ENCODE measurements at regions of chr14 and their contacts with region 1.

Region 1: DNA sequence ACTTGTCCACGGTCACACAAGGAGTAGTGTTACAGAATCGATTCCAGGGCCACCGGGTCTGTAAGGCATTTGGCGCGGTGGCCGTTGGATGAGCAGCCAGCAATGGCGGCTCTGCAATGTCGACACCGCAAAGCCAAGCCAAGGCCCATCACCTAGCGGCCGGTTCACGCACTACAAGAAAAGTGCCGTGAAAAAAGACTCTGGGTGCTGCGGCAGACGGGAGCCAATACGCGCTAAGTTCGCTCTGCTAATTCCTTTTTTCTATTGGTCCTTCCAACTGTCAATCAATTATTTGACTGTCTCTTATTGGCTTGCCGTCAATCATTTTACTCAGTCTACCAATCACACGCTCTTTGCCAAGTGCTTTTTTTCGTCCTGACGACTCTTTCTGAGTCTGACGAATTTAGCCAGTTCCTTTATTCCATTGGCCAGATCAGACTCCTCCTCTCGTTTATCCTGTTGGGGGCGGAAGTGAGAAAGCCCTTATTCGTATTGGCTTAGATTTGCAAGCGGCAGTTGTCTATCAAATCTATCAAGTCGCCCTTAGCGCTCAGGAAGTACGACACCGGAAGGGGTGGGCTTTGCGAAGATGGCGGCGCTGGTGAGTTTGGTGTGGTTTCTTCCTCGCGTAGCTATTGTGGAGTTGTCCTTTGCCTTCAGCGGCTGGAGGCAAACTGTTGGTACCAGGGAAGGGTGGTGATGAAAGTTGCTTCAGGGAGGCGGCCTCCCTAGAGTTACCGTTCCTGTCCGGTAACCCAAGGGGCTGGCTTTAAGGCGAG is at the start of gene NGDN:
- DNase-seq: peak; percentile 98
- ATAC-seq: peak; percentile 93
- H3K4me3 ChIP-seq: peak within 1 kb of the TSS; percentile 77 to 94 (median 92)
- H3K4me3 Mint-ChIP-seq: no peak within 1 kb of the TSS
- H3K27ac ChIP-seq: peak within 1 kb of the TSS; percentile 86 to 87
- H3K27ac Mint-ChIP-seq: no peak within 1 kb of the TSS
- H3K4me1 ChIP-seq: peaks cover 11 to 15% of the 10 kb centered on the region in 2 donors
- H3K4me1 Mint-ChIP-seq: peaks cover 7% of the 10 kb centered on the region
- H3K27me3 ChIP-seq: no peaks in the 10 kb centered on the region
- H3K27me3 Mint-ChIP-seq: peaks cover 7% of the 10 kb centered on the region
- CTCF ChIP-seq: peak; percentile 86
- total RNA-seq, gene NGDN: 81.8 and 84.4 TPM in 2 replicates

Region 2: DNA sequence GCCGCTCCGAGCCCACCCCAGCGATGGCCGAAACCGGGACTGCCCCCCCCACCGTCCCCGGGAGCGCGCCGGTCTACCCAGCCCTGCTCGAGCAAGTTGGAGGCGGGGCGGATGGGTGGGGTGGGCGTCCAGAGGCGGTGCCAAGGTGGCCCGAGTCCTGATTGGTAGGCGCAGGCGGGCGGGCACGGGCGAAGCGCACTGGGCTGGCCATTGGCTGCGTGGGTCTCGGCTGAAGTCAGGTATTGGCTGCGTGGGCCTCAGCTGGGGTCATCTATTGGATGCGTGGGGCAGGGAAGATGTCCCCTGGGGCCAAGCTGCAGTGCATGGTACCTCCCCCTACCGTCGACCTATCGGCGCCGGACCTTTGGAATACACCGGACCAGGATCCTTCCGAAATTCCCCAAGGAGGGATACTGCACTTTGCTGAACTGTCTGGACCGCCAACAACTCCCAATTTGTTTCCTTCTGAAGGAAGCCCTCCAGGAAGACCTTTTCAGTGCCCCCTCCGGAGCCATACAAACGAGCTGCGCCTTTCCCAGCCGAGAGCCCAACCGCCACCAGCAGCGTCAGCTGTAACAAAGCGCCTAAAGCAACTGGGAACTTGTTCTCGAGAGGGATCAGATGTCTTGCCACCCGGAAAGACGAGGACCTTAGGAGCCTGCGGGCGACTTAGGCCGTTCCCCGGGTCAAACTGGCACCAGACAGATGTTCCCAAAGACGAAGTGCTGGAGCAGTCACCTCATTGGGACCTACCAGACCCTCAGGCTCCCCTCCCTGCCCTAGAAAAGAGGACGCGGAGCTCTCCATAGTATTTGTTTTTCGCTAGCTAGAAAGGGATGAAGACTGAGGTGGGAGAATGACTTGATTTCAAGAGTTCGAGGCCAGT is 183.1 kb before region 1 on chr14 and contains the start of gene HOMEZ:
- CTCF ChIA-PET with region 1: no interaction called
- POLR2A ChIA-PET with region 1: no interaction called
- intact Hi-C with region 1: loop called (anchors 1 kb)
- DNase-seq: peak; percentile 97
- ATAC-seq: peak; percentile 97
- H3K4me3 ChIP-seq: peak within 1 kb of the TSS; percentile 56 to 90 (median 83)
- H3K4me3 Mint-ChIP-seq: peak within 1 kb of the TSS; percentile 98
- H3K27ac ChIP-seq: peak within 1 kb of the TSS; percentile 49 to 83
- H3K27ac Mint-ChIP-seq: peak within 1 kb of the TSS; percentile 93
- H3K4me1 ChIP-seq: peaks cover 13 to 17% of the 10 kb centered on the region in 2 donors
- H3K4me1 Mint-ChIP-seq: peaks cover 23% of the 10 kb centered on the region
- H3K27me3 ChIP-seq: no peaks in the 10 kb centered on the region
- H3K27me3 Mint-ChIP-seq: no peaks in the 10 kb centered on the region
- CTCF ChIP-seq: no peak
- total RNA-seq, gene HOMEZ: 15.5 TPM in 2 replicates

Region 3: DNA sequence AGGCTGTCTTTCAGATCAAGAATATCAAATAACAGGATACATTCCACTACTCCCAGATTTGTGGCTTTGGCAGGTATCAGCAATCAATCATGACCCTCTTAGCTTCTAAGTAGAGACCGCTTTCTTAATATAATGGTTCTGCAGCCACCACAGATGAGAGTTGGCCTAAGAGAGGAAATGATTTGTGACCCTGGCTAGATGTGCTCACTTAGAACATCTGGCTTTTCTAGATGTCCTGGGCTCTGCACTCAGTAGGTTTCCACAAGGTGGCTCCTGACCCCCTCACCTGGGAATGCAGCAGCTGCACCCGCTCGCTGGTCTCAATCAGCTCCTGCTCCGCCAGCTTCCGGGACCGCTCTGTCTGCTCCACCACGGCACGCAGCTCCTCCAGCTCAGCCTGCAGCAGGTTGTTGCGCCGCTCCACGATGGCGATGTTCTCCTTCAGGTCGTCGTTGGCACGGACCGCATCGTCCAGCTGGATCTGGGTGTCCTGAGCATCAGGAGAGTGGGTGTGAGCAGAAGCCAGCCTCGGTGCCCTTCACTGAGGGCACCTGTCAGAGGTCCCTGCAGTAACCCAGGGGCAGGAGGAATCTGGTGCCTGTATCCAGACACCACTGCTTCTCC is 83.6 kb before region 1 on chr14:
- CTCF ChIA-PET with region 1: no interaction called
- POLR2A ChIA-PET with region 1: no interaction called
- intact Hi-C with region 1: no loop called
- DNase-seq: no peak
- ATAC-seq: no peak
- H3K4me3 ChIP-seq: no peak overlapping the region
- H3K4me3 Mint-ChIP-seq: no peak overlapping the region
- H3K27ac ChIP-seq: no peak overlapping the region
- H3K27ac Mint-ChIP-seq: no peak overlapping the region
- H3K4me1 ChIP-seq: no peaks in the 10 kb centered on the region
- H3K4me1 Mint-ChIP-seq: no peaks in the 10 kb centered on the region
- H3K27me3 ChIP-seq: peaks cover 0 to 12% (median 0%) of the 10 kb centered on the region in 4 experiments
- H3K27me3 Mint-ChIP-seq: peaks cover 35% of the 10 kb centered on the region
- CTCF ChIP-seq: no peak

Region 4: DNA sequence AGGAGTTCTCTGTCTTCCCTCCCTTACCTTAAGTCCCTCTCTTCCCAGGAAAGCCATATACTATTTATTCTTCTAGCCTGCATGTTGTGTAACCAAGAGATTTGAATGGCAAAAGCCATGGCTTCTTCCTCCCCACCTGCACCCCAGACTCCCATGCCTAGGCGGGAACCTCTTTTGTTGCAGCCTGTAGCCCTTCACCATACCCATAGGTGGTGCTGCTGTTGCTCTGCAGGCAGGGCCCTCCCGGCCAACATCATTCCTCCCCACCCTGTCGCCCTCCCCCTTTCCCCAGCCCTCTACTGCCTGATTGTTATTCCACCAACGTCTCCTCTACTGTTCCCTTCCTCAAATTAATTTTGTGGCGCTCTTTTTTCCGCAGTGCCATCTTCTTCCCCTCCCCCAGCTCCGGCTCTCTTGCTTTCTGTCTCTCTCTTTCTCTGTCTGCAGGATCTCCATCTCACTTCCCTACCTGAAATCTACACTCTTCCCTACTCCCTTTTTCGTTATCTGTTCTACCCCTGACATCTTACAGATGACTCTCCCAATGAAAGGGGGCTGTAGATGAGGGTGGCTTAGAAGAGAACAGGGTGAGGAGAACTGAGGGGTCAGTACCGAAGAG is 14.0 kb after region 1 on chr14:
- CTCF ChIA-PET with region 1: interaction called, 15 read pairs
- POLR2A ChIA-PET with region 1: no interaction called
- intact Hi-C with region 1: loop called (anchors 1 kb)
- DNase-seq: no peak
- ATAC-seq: no peak
- H3K4me3 ChIP-seq: no peak overlapping the region
- H3K4me3 Mint-ChIP-seq: no peak overlapping the region
- H3K27ac ChIP-seq: no peak overlapping the region
- H3K27ac Mint-ChIP-seq: no peak overlapping the region
- H3K4me1 ChIP-seq: no peaks in the 10 kb centered on the region
- H3K4me1 Mint-ChIP-seq: no peaks in the 10 kb centered on the region
- H3K27me3 ChIP-seq: no peaks in the 10 kb centered on the region
- H3K27me3 Mint-ChIP-seq: no peaks in the 10 kb centered on the region
- CTCF ChIP-seq: peak; percentile 10

Region 5: GRCh38 chr14:23555882-23556699 is 86.8 kb after region 1 on chr14 and contains the start of gene THTPA:
- CTCF ChIA-PET with region 1: interaction called, 335 read pairs
- POLR2A ChIA-PET with region 1: interaction called, 5 read pairs
- intact Hi-C with region 1: loop called (anchors 1 kb)
- DNase-seq: peak; percentile 96
- ATAC-seq: peak; percentile 78
- H3K4me3 ChIP-seq: peak within 1 kb of the TSS; percentile 17 to 97 (median 81)
- H3K4me3 Mint-ChIP-seq: peak within 1 kb of the TSS; percentile 98
- H3K27ac ChIP-seq: peak within 1 kb of the TSS; percentile 69 to 84
- H3K27ac Mint-ChIP-seq: peak within 1 kb of the TSS; percentile 99
- H3K4me1 ChIP-seq: peaks cover 19 to 36% of the 10 kb centered on the region in 2 donors
- H3K4me1 Mint-ChIP-seq: peaks cover 45% of the 10 kb centered on the region
- H3K27me3 ChIP-seq: no peaks in the 10 kb centered on the region
- H3K27me3 Mint-ChIP-seq: no peaks in the 10 kb centered on the region
- CTCF ChIP-seq: no peak
- total RNA-seq, gene THTPA: 21.4 and 21.5 TPM in 2 replicates

Region 6: GRCh38 chr14:23953464-23954278 is 484.4 kb after region 1 on chr14 and contains the start of gene DHRS4:
- CTCF ChIA-PET with region 1: no interaction called
- POLR2A ChIA-PET with region 1: no interaction called
- intact Hi-C with region 1: loop called (anchors 5 kb)
- DNase-seq: peak; percentile 83
- ATAC-seq: peak; percentile 94
- H3K4me3 ChIP-seq: peak within 1 kb of the TSS; percentile 32 to 97 (median 70)
- H3K4me3 Mint-ChIP-seq: peak within 1 kb of the TSS; percentile 97
- H3K27ac ChIP-seq: peak within 1 kb of the TSS; percentile 40 to 63
- H3K27ac Mint-ChIP-seq: peak within 1 kb of the TSS; percentile 90
- H3K4me1 ChIP-seq: peaks cover 7 to 16% of the 10 kb centered on the region in 2 donors
- H3K4me1 Mint-ChIP-seq: peaks cover 25% of the 10 kb centered on the region
- H3K27me3 ChIP-seq: no peaks in the 10 kb centered on the region
- H3K27me3 Mint-ChIP-seq: no peaks in the 10 kb centered on the region
- CTCF ChIP-seq: peak; percentile 88
- total RNA-seq, gene DHRS4: 15.3 and 15.6 TPM in 2 replicates